ENCODE measurements at regions of chr12 and their contacts with region 1.

Region 1: DNA sequence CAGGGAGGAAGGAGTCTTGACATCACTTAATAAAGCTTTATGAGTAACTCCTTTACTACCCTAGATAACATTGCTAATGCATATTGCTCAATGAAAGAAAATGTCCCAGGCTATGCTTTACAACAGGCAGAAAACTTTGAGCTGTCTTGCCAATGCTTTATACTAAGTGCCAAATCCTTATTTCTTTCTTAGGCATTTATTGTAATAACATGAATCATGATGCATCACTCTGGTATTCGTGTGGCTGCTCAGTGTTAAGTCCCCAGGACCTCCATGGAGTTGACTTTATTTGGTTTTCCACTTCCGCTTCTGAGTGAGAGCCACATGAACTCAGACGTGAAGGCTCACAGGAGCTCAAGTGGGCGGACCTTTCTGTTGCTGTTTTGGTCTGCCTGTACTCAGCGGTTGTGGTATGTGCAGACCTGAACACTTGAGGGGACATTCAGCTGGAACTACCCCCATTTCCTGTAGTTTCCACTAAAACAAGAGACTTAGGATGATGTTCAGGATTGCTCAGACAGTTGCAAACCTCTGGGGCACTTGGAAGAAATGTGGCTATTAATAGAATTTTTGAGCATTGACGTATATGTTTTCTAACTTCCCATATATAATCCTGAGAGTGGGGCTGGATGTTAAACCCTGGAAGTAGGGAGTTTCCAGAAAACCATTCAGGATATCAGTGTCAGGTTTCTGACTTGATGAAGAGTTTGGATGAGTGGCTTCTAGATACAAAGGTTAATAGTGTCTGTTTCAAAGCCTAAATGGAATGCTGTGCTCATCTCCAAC is 258.6 kb downstream of the MSRB3 start:
- DNase-seq: peak; percentile 82
- ATAC-seq: peak; percentile 79
- H3K4me3 ChIP-seq: no peak overlapping the region
- H3K27ac ChIP-seq: peak overlapping the region; percentile 91
- H3K4me1 ChIP-seq: peaks cover 30% of the 10 kb centered on the region
- H3K27me3 ChIP-seq: no peaks in the 10 kb centered on the region
- CTCF ChIP-seq: no peak

Region 2: GRCh38 chr12:64946132-64946829 is 590.8 kb before region 1 on chr12:
- CTCF ChIA-PET with region 1: no interaction called
- POLR2A ChIA-PET with region 1: interaction called, 17 read pairs
- in situ Hi-C with region 1: no loop called
- intact Hi-C with region 1: no loop called
- DNase-seq: no peak
- ATAC-seq: peak; percentile 58; the same call in 1 of the 2 replicates
- H3K4me3 ChIP-seq: no peak overlapping the region
- H3K27ac ChIP-seq: no peak overlapping the region
- H3K4me1 ChIP-seq: no peaks in the 10 kb centered on the region; the same call in 1 of the 2 replicates
- H3K27me3 ChIP-seq: no peaks in the 10 kb centered on the region
- CTCF ChIP-seq: no peak

Region 3: DNA sequence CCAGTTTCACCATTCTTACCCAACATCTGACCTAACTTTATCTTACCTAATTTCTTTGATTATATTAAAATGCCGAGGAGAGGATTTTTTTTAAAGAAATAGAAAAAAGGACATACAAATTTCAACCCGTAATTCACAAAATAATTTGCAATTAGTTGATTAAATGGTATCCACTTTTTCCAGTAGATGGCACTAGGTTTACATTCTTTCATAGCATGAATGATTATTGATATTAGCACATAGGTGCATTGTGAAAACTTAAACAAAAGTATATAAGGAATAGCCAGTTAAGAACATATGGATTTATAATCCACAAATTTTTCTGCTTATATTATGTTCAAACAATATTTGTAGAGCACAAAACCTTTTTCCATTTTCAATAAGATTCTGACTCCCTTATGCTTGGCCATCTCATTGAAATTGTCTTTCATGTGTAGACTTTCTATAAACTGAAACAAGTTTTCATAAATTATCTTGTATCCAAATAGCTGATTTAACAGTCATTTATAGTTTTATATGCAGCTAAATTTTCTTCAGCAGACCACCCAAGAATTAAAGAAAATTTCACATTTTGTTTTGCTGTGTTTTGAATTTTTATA is 223.3 kb before region 1 on chr12:
- CTCF ChIA-PET with region 1: no interaction called
- POLR2A ChIA-PET with region 1: no interaction called
- in situ Hi-C with region 1: no loop called
- intact Hi-C with region 1: loop called (anchors 10 kb)
- DNase-seq: no peak
- ATAC-seq: no peak
- H3K4me3 ChIP-seq: no peak overlapping the region
- H3K27ac ChIP-seq: peak overlapping the region; percentile 3; the same call in 1 of the 2 replicates
- H3K4me1 ChIP-seq: no peaks in the 10 kb centered on the region; the same call in 1 of the 2 replicates
- H3K27me3 ChIP-seq: no peaks in the 10 kb centered on the region
- CTCF ChIP-seq: peak; percentile 57; the same call in 1 of the 2 replicates

Region 4: GRCh38 chr12:65585648-65586602 is 48.9 kb after region 1 on chr12:
- CTCF ChIA-PET with region 1: no interaction called
- POLR2A ChIA-PET with region 1: interaction called, 13 read pairs
- in situ Hi-C with region 1: no loop called
- intact Hi-C with region 1: no loop called
- DNase-seq: no peak
- ATAC-seq: no peak
- H3K4me3 ChIP-seq: no peak overlapping the region
- H3K27ac ChIP-seq: no peak overlapping the region
- H3K4me1 ChIP-seq: no peaks in the 10 kb centered on the region
- H3K27me3 ChIP-seq: no peaks in the 10 kb centered on the region
- CTCF ChIP-seq: no peak

Measured in Panc1 (cell line).